ENCODE measurements at regions of chr11 and their contacts with region 1.

Region 1: GRCh38 chr11:27698872-27699474 is 1.3 kb downstream of the BDNF start:
- DNase-seq: peak; percentile 77
- H3K4me3 ChIP-seq: peak overlapping the region; percentile 34 to 57 (median 51)
- H3K27ac ChIP-seq: peak overlapping the region in 1 of 4 donors; percentile 59
- H3K4me1 ChIP-seq: peaks cover 3 to 38% (median 35%) of the 10 kb centered on the region in 4 donors
- H3K27me3 ChIP-seq: peaks cover 23 to 92% (median 57%) of the 10 kb centered on the region in 3 donors
- CTCF ChIP-seq: peak; percentile 9 to 84 (median 48)
- EP300 ChIP-seq: no peak
- POLR2A ChIP-seq: no peak

Region 2: DNA sequence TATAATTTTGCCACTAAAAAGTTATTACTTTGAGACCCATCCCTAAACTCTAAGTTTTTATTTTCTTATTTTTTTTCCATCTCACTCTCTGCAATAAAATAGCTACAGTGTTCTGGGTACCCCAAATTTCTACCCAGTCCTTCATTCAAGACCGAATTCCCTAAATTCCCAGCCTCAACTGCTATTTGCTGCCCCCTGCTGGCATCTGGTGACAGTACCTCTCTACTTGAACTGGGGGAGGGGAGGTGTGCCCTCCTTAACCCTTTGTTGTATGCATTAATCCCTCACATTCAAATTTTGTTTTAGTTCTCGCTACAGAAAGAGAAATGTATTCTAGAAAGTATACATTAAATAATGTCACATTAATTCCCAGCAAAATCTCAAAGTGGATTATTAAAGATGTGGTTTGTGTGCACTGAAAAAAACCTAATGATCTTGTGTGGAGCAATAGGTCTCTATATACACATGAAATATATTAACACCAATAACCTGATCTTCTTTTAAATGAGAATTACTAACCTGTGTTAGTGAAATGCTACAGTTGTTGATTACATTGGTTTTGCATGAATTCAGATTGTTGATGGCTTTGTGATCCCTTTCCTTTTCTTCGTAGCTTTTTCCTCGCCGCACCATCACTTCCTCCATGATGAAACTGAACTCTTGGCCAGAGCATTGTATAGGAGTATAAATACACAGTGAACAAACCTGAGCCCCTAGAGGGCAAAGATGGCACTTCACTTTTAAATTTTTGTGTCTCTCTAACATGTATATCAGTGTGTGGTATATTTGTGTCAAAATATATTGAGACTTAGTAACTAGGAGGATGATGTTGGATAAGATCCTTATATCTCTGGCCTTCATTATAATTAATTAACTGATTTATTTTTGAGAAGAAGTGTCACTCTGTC is 999.2 kb after region 1 on chr11:
- intact Hi-C with region 1: loop called (anchors 5 kb)
- DNase-seq: no peak
- H3K4me3 ChIP-seq: no peak overlapping the region
- H3K27ac ChIP-seq: no peak overlapping the region
- H3K4me1 ChIP-seq: no peaks in the 10 kb centered on the region
- H3K27me3 ChIP-seq: no peaks in the 10 kb centered on the region
- CTCF ChIP-seq: peak in 3 of 4 experiments; percentile 24 to 59 (median 39)
- EP300 ChIP-seq: no peak
- POLR2A ChIP-seq: no peak

Region 3: DNA sequence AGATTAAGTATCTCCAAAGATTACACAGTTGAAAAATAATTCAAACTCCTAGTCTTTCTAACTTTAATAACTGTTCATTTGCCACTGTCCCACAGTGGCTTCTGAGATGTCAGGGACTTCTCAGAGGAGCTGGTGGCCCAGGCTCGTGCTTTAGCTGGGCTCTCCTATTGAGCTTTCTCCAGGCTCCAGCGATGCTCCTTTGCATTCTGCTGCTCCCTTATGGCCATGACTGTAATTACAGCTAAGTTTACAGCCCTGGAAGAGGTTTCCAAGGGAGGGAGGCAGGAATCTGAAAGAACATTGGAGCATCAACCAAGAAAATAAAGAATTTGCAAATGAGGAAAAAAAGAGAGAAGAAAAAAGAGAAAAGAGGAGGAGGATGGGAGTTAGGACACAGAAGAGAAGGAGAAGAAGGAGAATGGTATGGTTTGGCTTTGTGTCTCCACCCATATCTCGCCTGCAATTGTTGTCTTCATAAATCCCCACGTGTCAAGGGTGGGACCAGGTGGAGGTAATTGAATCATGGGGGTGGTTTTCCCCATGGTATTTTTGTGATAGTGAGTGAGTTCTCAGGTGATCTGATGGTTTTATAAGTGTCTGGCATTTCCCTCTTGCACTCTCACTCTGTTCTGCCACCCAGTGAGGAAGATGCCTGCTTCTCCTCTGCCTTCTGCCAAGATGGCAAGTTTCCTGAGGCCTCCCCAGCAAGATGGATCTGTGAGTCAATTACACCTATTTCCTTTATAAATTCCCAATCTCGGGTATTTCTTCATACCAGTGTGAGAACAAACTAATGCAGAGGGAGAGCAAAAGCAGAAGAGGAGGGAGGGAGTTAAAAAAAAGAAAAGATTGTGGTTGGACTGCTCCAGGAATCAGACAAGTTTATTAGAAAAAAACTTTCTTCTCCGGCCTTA is 1460.8 kb after region 1 on chr11:
- intact Hi-C with region 1: loop called (anchors 2 kb)
- DNase-seq: no peak
- H3K4me3 ChIP-seq: no peak overlapping the region
- H3K27ac ChIP-seq: no peak overlapping the region
- H3K4me1 ChIP-seq: no peaks in the 10 kb centered on the region
- H3K27me3 ChIP-seq: no peaks in the 10 kb centered on the region
- CTCF ChIP-seq: peak in 3 of 4 experiments; percentile 35 to 64 (median 62)
- EP300 ChIP-seq: no peak
- POLR2A ChIP-seq: no peak

Region 4: GRCh38 chr11:29333993-29334775 is 1635.2 kb after region 1 on chr11:
- intact Hi-C with region 1: loop called (anchors 5 kb)
- DNase-seq: no peak
- H3K4me3 ChIP-seq: no peak overlapping the region
- H3K27ac ChIP-seq: no peak overlapping the region
- H3K4me1 ChIP-seq: no peaks in the 10 kb centered on the region
- H3K27me3 ChIP-seq: no peaks in the 10 kb centered on the region
- CTCF ChIP-seq: peak in 1 of 4 experiments; percentile 36
- EP300 ChIP-seq: no peak
- POLR2A ChIP-seq: no peak

Measured in sigmoid colon (tissue), 7 donors.